Left ventricle myocardium inferior (tissue), 1 donor: ENCODE measurements at regions of chr16 and their contacts with region 1.

Region 1: DNA sequence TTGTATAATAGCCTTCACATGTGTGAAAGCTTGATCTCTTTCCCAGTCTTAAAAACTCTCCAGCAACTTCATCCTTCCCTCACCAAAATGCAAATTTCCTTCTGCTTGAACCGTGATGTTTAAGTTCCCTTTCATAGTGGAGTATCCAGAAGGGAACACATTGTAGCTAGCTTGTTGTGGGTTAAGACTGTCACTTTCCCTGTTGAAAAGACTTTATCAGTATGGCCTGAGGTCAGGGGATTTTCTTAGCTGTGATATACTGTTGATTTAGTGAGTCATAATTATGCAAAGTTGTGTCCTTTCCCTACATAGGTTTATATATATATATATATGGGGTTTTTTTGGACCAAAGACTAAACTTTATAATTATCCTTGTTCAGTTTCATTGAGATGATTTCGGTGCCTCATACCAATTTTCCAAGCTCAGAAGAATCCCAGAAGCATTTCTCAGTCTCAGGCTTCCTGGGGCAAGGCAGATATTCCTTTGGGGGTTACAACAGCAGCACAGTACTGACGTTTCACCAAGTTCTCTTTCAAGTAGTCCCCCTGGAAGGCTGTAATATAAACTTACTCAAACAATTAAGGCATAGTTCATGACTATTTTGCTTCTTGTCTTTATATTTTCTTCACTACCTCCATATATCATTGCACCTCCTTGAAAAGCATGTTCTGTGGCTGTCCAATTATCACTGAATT is 35.7 kb downstream of the ESRP2 start:
- DNase-seq: no peak
- H3K4me3 ChIP-seq: no peak overlapping the region
- H3K27ac ChIP-seq: no peak overlapping the region
- H3K4me1 ChIP-seq: peaks cover 25% of the 10 kb centered on the region
- H3K27me3 ChIP-seq: no peaks in the 10 kb centered on the region
- CTCF ChIP-seq: no peak

Region 2: DNA sequence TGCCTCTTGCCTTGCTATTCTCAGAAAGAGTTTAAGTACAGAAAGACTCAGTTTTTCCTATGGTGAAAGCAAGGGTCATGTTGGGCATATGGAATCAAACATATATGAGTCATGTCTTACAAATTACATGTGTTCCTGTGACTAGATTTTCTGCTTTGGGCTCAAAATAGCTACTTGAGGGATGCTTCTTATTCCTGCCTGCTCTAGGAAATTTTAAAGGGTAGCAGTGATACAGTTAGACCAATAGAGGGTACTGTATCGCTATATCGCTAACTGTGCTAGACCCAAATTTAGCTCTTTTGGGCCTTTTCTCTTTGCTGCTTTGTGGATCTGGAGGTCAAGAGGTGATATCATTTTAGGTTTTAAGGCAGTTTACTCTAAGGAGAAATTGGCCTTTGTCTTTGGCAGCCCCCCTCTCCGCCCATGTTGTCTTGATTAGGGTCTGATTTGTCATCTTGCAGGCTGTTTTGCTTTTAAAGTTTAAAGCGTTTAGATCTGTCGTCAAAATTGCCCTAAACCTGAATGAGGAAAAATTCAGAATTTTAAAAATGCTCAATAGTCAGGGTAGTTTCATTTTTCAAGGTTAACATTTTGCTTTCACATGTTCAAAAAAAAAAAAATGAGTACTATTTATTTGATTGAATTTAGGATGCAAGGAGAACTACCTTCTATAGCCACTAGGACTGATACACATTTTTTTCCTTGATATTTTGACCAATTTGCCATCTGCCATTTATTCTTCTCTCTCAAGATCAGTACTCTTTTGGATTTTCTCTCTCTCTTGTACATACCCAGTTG is 106.2 kb before region 1 on chr16:
- intact Hi-C with region 1: loop called (anchors 10 kb)
- DNase-seq: no peak
- H3K4me3 ChIP-seq: no peak overlapping the region
- H3K27ac ChIP-seq: no peak overlapping the region
- H3K4me1 ChIP-seq: peaks cover 79% of the 10 kb centered on the region
- H3K27me3 ChIP-seq: no peaks in the 10 kb centered on the region
- CTCF ChIP-seq: peak; percentile 61